ENCODE measurements at regions of chr13 and their contacts with region 1.

Region 1: DNA sequence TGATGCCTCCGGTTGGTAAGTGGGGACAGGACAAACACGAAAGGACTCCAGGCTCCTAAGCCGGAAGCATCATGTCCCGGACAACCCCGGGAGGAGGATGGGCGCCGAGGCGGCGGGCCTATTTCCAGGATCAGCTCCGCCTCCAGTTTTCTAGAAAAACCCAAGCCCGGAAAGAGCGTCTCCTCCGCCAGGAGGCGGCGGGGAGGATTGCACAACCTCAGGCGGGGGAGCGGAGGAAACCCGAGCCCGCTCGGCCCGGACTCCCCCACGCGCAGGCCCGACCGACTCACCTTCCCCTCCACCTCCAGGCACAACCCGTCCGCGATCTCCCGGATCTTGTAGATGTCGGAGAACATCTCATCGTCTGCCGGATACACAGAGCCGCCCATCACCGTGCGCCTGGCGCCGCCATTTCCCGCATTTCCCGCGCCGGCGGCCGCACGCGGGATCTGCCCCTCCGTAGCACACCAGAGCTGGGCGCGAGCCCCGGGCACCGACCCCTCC is 509 bp downstream of the TPT1 start:
- DNase-seq: peak; percentile 86
- ATAC-seq: peak; percentile 51
- H3K4me3 Mint-ChIP-seq: peak overlapping the region; percentile 98
- H3K27ac Mint-ChIP-seq: peak overlapping the region; percentile 100
- H3K4me1 Mint-ChIP-seq: peaks cover 52% of the 10 kb centered on the region
- H3K27me3 Mint-ChIP-seq: no peaks in the 10 kb centered on the region

Region 2: GRCh38 chr13:45297456-45298205 is 42.8 kb before region 1 on chr13:
- CTCF ChIA-PET with region 1: interaction called, 4 read pairs
- POLR2A ChIA-PET with region 1: interaction called, 12 read pairs
- DNase-seq: peak; percentile 40
- ATAC-seq: peak; percentile 77
- H3K4me3 Mint-ChIP-seq: no peak overlapping the region
- H3K27ac Mint-ChIP-seq: peak overlapping the region; percentile 85
- H3K4me1 Mint-ChIP-seq: peaks cover 27% of the 10 kb centered on the region
- H3K27me3 Mint-ChIP-seq: peaks cover 2% of the 10 kb centered on the region

Region 3: GRCh38 chr13:45367358-45367757 is 26.9 kb after region 1 on chr13:
- CTCF ChIA-PET with region 1: interaction called, 8 read pairs
- POLR2A ChIA-PET with region 1: interaction called, 19 read pairs
- DNase-seq: peak; percentile 96
- ATAC-seq: peak; percentile 99
- H3K4me3 Mint-ChIP-seq: peak overlapping the region; percentile 12
- H3K27ac Mint-ChIP-seq: peak overlapping the region; percentile 90
- H3K4me1 Mint-ChIP-seq: peaks cover 70% of the 10 kb centered on the region
- H3K27me3 Mint-ChIP-seq: no peaks in the 10 kb centered on the region

Region 4: DNA sequence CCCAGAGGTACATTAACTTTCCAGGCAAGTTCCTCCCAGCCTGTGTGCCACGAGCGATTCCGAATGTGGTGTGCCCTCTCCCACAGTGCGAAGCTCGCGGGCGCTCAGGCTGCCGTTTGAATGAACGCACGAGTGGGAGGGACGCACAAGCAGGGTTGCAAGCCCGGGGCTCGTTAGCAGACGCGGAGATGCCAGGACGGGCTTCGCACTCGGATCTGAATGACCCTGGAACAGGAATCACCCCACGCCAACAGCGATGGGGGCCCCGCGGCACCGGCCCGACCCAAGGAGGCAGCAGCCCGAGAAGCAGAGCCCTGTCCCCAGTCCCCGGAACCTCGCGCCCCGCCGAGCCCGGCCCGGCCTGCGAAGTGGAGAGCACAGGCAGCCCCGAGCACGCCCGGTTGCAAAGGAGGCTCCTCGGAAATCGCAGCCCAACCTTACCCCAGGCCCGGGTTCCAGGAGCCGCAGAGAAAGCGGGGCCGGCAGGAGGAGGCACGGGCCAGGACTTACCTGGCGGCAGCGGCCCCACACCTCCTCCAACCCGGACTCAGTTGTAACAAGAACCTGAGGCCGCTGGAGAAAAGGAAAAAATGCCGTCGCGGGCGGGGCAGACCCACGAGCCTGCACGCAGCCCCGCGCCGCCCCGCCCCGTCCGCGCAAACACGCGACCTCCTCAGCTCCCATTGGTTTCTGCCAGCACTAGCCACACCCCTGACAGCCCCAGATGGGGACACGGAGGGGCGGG is 77.5 kb after region 1 on chr13 and contains the start of gene SLC25A30:
- CTCF ChIA-PET with region 1: interaction called, 4 read pairs
- POLR2A ChIA-PET with region 1: interaction called, 10 read pairs
- DNase-seq: peak; percentile 94
- ATAC-seq: peak; percentile 95
- H3K4me3 Mint-ChIP-seq: peak within 1 kb of the TSS; percentile 91
- H3K27ac Mint-ChIP-seq: peak within 1 kb of the TSS; percentile 95
- H3K4me1 Mint-ChIP-seq: peaks cover 13% of the 10 kb centered on the region
- H3K27me3 Mint-ChIP-seq: no peaks in the 10 kb centered on the region
- total RNA-seq, gene SLC25A30: 19.0 to 19.7 TPM